ENCODE measurements at regions of chr12 and their contacts with region 1.

Region 1: DNA sequence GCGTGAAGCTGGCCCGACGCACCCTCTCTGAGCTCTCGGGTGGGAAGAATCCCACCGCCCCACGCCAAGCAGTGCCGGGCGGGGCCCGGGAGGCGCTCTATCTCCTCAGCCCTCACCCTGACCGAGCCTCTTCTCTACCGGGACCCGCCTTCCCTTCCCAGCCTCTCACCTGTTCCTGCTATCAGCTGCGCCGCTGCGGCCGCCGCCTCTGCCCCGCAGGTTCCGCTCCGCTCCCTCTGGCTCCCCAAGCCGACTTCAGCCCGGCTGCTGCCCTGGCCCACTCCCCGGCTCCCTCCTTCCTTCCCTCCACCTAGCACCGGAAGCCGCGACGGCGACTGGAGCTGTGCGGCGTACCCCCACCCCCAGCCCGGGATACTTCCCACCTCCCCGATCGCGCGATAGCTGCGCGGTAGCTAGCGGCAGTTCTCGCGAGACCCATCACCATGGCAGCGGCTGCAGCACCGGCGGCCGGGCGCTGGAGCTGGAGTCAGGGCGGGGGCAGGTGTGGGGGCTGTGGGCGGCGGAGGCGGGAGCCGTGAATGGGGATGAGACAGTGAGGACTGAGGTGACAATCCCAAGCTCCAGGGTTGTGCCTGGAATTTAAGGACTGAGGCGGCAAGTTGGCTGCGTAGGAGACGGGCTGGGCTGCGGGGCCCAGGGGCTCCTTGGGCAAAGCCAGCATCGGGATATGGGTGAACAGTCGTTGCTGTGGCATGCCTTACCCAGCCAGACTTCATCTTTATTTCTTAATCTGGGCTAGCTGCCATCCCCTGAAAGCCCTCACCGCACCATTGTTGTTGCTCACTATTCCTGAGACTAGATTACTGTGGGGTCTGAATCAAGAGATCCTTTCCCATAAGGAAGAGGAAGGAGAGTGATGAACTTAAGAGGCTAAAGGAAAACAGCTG is at the start of gene ARF3:
- DNase-seq: peak; percentile 94
- ATAC-seq: peak; percentile 95
- H3K4me3 ChIP-seq: peak within 1 kb of the TSS; percentile 59 to 96 (median 91)
- H3K4me3 Mint-ChIP-seq: peak within 1 kb of the TSS; percentile 95
- H3K27ac ChIP-seq: peak within 1 kb of the TSS; percentile 44 to 81
- H3K27ac Mint-ChIP-seq: peak within 1 kb of the TSS; percentile 92
- H3K4me1 ChIP-seq: peaks cover 34 to 36% of the 10 kb centered on the region in 2 donors
- H3K4me1 Mint-ChIP-seq: peaks cover 42% of the 10 kb centered on the region
- H3K27me3 ChIP-seq: peaks cover 0 to 3% (median 0%) of the 10 kb centered on the region in 4 experiments
- H3K27me3 Mint-ChIP-seq: no peaks in the 10 kb centered on the region
- CTCF ChIP-seq: no peak
- total RNA-seq, gene ARF3: 77.5 and 83.6 TPM in 2 replicates

Region 2: GRCh38 chr12:48917857-48918537 is 39.4 kb before region 1 on chr12:
- CTCF ChIA-PET with region 1: no interaction called
- POLR2A ChIA-PET with region 1: no interaction called
- intact Hi-C with region 1: no loop called
- DNase-seq: no peak
- ATAC-seq: no peak
- H3K4me3 ChIP-seq: peak overlapping the region in 2 of 5 experiments; percentile 13 to 31
- H3K4me3 Mint-ChIP-seq: peak overlapping the region; percentile 53
- H3K27ac ChIP-seq: peak overlapping the region in 1 of 2 donors; percentile 16
- H3K27ac Mint-ChIP-seq: peak overlapping the region; percentile 65
- H3K4me1 ChIP-seq: peaks cover 14 to 15% of the 10 kb centered on the region in 2 donors
- H3K4me1 Mint-ChIP-seq: peaks cover 17% of the 10 kb centered on the region
- H3K27me3 ChIP-seq: no peaks in the 10 kb centered on the region
- H3K27me3 Mint-ChIP-seq: no peaks in the 10 kb centered on the region
- CTCF ChIP-seq: no peak

Region 3: DNA sequence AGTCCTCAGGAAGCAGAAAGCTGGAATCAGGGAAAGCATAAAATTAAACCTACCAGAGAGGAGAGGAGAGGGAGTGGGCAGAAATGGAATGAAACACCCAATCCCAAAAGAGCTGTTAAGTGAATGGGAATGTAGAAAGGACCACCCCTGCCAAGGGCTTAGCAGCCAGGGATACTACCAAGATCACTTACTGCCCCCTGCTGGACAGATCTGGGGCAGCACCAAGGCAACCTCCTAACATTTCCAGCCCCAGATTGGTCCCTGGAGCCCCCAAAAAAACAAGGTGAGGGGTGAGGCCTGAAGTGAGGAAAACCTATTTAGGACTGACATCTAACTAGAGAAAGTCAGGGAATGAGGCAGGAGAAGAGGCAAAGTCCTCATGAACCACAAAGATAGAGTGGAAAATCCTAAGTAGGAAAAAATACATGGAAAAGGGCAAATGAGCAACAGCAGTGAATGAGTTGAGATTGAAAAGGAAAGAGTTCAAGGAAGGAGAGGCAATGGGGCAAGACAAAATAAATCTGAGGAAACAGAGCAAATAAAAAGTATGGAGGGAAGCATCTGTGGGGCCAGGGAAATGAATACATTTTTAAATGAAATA is 20.9 kb before region 1 on chr12:
- CTCF ChIA-PET with region 1: interaction called, 6 read pairs
- POLR2A ChIA-PET with region 1: interaction called, 5 read pairs
- intact Hi-C with region 1: loop called (anchors 2 kb)
- DNase-seq: peak; percentile 81
- ATAC-seq: peak; percentile 57
- H3K4me3 ChIP-seq: no peak overlapping the region
- H3K4me3 Mint-ChIP-seq: no peak overlapping the region
- H3K27ac ChIP-seq: no peak overlapping the region
- H3K27ac Mint-ChIP-seq: peak overlapping the region; percentile 4
- H3K4me1 ChIP-seq: peaks cover 16 to 34% of the 10 kb centered on the region in 2 donors
- H3K4me1 Mint-ChIP-seq: peaks cover 37% of the 10 kb centered on the region
- H3K27me3 ChIP-seq: no peaks in the 10 kb centered on the region
- H3K27me3 Mint-ChIP-seq: no peaks in the 10 kb centered on the region
- CTCF ChIP-seq: peak; percentile 97

Region 4: DNA sequence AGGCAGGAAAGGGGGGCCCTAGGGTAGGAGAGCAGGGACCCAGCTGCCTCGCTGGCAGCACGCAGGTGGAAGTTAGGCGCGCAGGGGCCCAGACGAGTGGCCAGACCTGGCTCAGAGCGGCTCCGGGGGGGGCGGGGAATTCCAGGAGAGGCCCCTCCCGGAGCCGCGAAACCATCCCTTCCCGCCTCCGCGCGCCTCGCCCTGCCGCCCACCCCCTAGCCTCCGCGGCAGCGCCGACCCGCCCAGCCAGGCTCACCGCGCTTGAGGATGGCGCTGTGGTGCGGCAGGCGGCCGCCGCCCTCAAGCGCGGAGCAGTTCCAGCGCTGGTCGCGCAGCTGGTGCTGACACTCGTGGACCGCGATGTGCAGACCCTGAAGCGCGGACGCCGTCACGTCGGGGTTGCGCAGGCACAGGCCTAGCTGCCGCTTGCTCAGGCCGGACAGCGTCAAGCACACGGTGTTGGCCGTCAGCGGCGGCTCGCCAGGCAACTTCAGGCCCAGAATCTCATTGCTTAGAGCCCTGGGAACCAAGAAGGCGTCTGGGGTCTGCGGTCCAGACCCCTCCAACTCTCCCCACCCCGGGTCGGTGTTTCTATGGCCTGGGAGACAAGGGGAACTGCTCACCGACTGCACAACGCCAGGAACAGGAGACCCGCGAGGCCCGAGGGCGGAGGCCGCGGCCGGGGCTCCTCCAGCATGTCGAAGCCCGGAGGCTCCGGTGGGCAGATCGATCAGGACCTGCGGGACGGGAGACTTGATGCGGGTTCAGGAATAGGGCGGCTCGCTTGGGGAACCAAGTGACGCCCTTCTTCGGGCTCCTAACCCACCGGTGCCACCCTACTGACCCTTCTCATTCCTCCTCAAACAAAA is 12.7 kb after region 1 on chr12:
- CTCF ChIA-PET with region 1: interaction called, 12 read pairs
- POLR2A ChIA-PET with region 1: interaction called, 6 read pairs
- intact Hi-C with region 1: no loop called
- DNase-seq: peak; percentile 70
- ATAC-seq: peak; percentile 63
- H3K4me3 ChIP-seq: peak overlapping the region in 4 of 5 experiments; percentile 8 to 34 (median 28)
- H3K4me3 Mint-ChIP-seq: peak overlapping the region; percentile 80
- H3K27ac ChIP-seq: no peak overlapping the region
- H3K27ac Mint-ChIP-seq: no peak overlapping the region
- H3K4me1 ChIP-seq: peaks cover 47 to 51% of the 10 kb centered on the region in 2 donors
- H3K4me1 Mint-ChIP-seq: peaks cover 40% of the 10 kb centered on the region
- H3K27me3 ChIP-seq: peaks cover 0 to 51% (median 40%) of the 10 kb centered on the region in 4 experiments
- H3K27me3 Mint-ChIP-seq: peaks cover 39% of the 10 kb centered on the region
- CTCF ChIP-seq: no peak

Region 5: GRCh38 chr12:48977315-48978281 is 20.2 kb after region 1 on chr12:
- CTCF ChIA-PET with region 1: interaction called, 26 read pairs
- POLR2A ChIA-PET with region 1: no interaction called
- intact Hi-C with region 1: loop called (anchors 2 kb)
- DNase-seq: peak; percentile 90
- ATAC-seq: peak; percentile 69
- H3K4me3 ChIP-seq: peak overlapping the region in 3 of 5 experiments; percentile 60 to 86 (median 65)
- H3K4me3 Mint-ChIP-seq: peak overlapping the region; percentile 72
- H3K27ac ChIP-seq: no peak overlapping the region
- H3K27ac Mint-ChIP-seq: peak overlapping the region; percentile 73
- H3K4me1 ChIP-seq: peaks cover 55 to 56% of the 10 kb centered on the region in 2 donors
- H3K4me1 Mint-ChIP-seq: peaks cover 57% of the 10 kb centered on the region
- H3K27me3 ChIP-seq: peaks cover 2 to 90% (median 54%) of the 10 kb centered on the region in 4 experiments
- H3K27me3 Mint-ChIP-seq: peaks cover 74% of the 10 kb centered on the region
- CTCF ChIP-seq: peak; percentile 92

Region 6: DNA sequence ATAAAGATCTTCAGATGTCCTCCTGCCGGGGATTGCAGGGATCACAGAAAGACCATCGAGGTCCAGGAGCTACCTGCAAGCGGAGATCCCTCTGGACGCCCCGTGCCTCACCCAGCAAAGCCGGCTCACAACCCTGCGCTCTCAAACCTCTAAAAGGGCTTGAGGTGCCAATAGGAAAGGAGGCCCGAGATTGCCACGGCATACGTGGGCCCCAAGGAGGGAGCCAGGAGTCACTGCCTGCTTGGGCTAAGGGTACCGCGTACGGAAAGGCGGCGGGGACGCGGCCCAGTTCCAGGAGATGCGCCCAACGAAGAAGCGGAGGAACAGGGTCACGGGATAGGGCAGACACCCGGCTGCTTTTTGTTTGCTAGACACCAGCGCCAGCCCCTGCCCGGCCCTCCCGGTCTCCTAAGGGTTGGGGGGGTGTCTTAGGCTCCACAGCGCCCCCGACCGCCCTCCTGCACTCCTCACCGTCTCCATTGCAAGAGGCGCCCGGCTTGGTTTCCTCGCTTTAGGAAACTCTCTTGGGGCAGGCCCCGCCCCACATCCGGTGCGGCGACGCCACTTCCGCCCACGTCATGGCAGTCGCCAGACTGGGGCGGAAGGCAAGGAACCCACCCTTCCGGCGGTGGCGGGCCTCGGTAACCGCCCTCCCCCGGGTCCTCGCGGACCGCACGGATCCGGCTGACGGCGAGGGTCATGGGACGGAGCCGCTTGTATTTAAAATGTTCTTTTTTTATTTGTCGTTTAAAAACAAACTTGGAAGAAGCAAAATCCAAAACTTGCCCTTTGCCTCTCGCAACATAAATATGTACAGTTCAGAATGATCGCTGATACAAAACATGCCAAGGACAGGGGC is 61.1 kb after region 1 on chr12 and contains the start of gene PRKAG1:
- CTCF ChIA-PET with region 1: interaction called, 3 read pairs
- POLR2A ChIA-PET with region 1: no interaction called
- intact Hi-C with region 1: loop called (anchors 1 kb)
- DNase-seq: peak; percentile 98
- ATAC-seq: peak; percentile 88
- H3K4me3 ChIP-seq: peak within 1 kb of the TSS; percentile 79 to 88 (median 86)
- H3K4me3 Mint-ChIP-seq: peak within 1 kb of the TSS; percentile 91
- H3K27ac ChIP-seq: peak within 1 kb of the TSS; percentile 95 to 99
- H3K27ac Mint-ChIP-seq: peak within 1 kb of the TSS; percentile 98
- H3K4me1 ChIP-seq: peaks cover 18 to 21% of the 10 kb centered on the region in 2 donors
- H3K4me1 Mint-ChIP-seq: peaks cover 29% of the 10 kb centered on the region
- H3K27me3 ChIP-seq: no peaks in the 10 kb centered on the region
- H3K27me3 Mint-ChIP-seq: no peaks in the 10 kb centered on the region
- CTCF ChIP-seq: peak; percentile 74
- total RNA-seq, gene PRKAG1: 58.6 and 60.0 TPM in 2 replicates

Region 7: GRCh38 chr12:49644620-49644994 is 687.2 kb after region 1 on chr12:
- CTCF ChIA-PET with region 1: no interaction called
- POLR2A ChIA-PET with region 1: no interaction called
- intact Hi-C with region 1: no loop called
- DNase-seq: peak; percentile 89
- ATAC-seq: peak; percentile 97
- H3K4me3 ChIP-seq: no peak overlapping the region
- H3K4me3 Mint-ChIP-seq: peak overlapping the region; percentile 36
- H3K27ac ChIP-seq: peak overlapping the region in 1 of 2 donors; percentile 52
- H3K27ac Mint-ChIP-seq: peak overlapping the region; percentile 79
- H3K4me1 ChIP-seq: peaks cover 16 to 18% of the 10 kb centered on the region in 2 donors
- H3K4me1 Mint-ChIP-seq: peaks cover 18% of the 10 kb centered on the region
- H3K27me3 ChIP-seq: no peaks in the 10 kb centered on the region
- H3K27me3 Mint-ChIP-seq: no peaks in the 10 kb centered on the region
- CTCF ChIP-seq: peak; percentile 96